ENCODE measurements at regions of chr10 and their contacts with region 1.

Region 1: DNA sequence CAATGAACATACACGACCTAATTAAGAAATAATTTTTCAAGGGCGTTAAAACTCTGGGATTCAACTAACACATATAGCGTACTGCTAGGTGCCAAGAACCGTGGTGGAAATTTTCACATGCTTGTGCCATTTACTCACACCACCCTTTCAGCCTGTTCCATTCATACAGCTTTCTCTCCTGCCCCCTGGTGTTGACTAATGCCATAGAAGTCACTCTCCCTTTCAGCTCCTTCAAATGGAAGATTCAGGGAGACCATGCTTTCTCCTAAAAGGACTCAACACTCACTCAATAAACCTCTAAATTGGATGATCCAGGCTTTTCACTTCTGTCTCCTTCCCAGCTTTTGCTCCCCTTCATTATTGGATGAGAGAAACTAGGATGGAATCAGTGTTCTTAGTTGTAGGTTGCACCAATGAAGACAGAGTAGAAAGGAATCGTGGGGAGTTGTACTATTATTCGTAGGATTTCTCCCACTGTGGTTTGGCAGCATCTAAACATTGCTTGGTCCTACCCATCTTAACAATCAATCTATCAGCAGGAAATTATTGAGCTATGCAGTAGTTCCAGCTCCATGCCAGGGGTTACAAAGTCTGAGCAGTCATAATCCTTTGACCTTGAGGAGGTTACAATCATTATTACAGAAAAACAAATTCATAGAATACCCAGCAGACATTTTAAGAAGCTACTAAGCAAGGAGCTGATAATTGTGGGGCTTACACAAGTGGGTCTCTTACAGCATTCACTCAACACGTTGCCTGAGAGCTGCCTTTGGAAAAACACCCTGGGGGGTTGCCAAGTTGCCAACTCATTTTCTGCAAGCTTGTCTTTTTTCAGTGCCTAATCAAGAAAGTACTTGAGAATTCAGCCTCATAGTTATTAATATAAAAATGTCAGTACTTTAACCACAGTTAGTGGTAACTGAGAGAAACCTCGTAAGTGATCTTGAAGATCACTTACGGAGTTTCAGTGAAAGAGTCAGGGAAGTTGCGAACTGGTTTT is 2.8 kb upstream of the PPP1R3C start:
- DNase-seq: peak; percentile 30
- H3K4me3 ChIP-seq: no peak overlapping the region
- H3K27ac ChIP-seq: no peak overlapping the region
- H3K4me1 ChIP-seq: no peaks in the 10 kb centered on the region
- CTCF ChIP-seq: peak; percentile 74

Region 2: GRCh38 chr10:91298224-91298871 is 337.4 kb before region 1 on chr10:
- CTCF ChIA-PET with region 1: no interaction called
- POLR2A ChIA-PET with region 1: interaction called, 5 read pairs
- intact Hi-C with region 1: loop called (anchors 5 kb)
- DNase-seq: peak; percentile 78
- H3K4me3 ChIP-seq: no peak overlapping the region
- H3K27ac ChIP-seq: no peak overlapping the region
- H3K4me1 ChIP-seq: no peaks in the 10 kb centered on the region
- CTCF ChIP-seq: peak; percentile 90

Measured in OCI-LY7 (cell line).